ENCODE measurements at regions of chr1 and their contacts with region 1.

Region 1: DNA sequence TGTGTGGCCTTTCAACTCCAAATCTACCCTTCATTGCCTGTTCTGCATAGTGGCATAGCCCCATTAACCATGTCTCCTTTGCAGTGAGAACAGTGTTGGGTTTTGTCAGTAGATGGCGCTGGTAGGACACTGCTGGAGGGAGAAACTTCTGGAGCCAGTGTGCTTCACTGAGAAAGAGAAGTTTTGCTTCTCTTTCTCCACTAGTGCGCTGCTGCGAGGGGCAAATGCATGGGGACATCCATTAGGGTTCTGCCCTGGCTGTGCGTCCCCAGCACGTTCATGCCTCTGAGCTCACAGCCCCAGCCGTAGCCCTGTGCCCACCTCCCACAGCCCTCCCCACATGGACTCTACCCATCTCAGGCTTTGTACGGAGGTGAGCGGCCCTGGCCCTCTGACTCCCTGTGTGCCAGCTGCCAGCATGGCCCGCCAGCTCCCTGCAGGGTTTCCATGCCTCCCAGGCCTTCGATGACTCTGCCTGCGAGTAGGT is 53.1 kb downstream of the RIMS3 start:
- DNase-seq: peak; percentile 71
- H3K4me3 ChIP-seq: no peak overlapping the region
- H3K27ac ChIP-seq: no peak overlapping the region
- H3K4me1 ChIP-seq: no peaks in the 10 kb centered on the region
- H3K27me3 ChIP-seq: peaks cover 1 to 11% of the 10 kb centered on the region in 2 experiments
- CTCF ChIP-seq: peak; percentile 75 to 81
- POLR2A ChIP-seq: no peak

Region 2: DNA sequence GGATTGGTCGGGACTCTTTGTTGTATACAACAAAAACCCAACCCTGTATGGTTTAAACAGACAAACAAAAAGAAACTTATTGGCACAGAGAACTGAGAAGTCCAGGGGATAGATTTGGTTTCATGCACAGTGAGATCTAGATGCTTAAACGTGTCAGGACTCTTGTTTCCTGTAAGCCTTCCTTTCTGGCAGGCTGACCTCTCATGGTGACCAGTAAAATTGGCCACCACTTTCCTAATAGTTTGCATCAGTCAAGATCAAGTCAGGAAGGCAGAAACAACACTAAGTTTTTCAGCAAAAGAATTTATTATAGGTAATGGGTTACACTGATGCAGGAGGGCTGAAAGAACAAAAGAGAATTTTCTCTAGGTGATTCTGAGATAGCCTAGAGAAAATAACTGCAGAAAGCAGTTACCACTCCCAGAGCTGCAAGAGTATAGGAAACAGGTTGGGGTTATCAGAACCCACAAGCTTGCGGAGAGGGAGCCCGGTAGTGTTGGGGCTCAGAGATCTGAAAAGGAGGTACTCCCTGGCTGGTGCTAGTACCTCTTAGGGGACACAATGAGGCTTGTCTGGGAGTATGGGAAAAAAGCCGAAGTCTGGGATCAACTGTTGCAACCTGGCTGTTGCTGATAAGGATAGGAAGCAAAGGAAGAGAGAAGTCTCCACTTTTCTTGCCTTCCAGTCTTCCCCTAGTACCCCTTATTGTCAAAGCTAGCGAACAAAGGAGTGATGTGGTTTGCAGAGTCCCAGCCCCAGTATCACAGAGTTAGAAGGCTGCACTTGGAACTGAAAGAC is 228.3 kb after region 1 on chr1:
- CTCF ChIA-PET with region 1: no interaction called
- POLR2A ChIA-PET with region 1: no interaction called
- dilution Hi-C with region 1: no loop called
- intact Hi-C with region 1: loop called (anchors 2 kb)
- DNase-seq: peak; percentile 22
- H3K4me3 ChIP-seq: no peak overlapping the region
- H3K27ac ChIP-seq: no peak overlapping the region
- H3K4me1 ChIP-seq: peaks cover 10% of the 10 kb centered on the region
- H3K27me3 ChIP-seq: peaks cover 24 to 29% of the 10 kb centered on the region in 2 experiments
- CTCF ChIP-seq: peak in 1 of 2 donors; percentile 1
- POLR2A ChIP-seq: no peak

Measured in endothelial cell of umbilical vein (primary cell).